Left lung (tissue), 14 donors: ENCODE measurements at regions of chr16 and their contacts with region 1.

Region 1: DNA sequence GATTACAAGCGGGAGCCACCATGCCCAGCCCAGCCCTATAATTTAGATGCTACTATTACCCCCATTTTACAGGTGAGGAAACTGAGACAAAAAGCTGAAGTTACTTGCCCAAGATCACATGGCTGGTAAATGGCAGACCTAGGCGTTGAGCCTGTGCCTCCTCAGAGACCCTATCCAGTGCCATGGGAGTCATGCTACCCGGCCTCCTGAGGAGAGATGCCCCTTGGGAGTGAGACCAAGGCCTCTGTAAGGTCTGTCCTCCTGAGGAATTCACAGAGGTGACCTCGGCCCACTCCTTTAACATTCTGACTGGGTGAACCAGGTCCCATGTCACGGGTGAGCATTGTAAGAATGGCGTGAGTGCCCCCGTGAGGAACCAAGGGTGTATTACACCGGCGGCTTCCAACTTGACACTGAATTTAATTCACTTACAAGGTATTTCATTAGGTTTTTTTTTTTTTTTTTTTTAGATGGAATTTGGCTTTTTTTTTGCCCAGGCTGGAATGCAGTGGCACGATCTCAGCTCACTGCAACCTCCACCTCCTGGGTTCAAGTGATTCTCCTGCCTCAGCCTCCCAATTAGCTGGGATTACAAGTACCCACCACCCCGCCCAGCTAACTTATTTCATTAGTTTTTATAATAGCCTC is 95.7 kb downstream of the ABCC6 start:
- DNase-seq: peak in 3 of 4 donors; percentile 47 to 66 (median 55)
- ATAC-seq: peak; percentile 97
- H3K4me3 ChIP-seq: no peak overlapping the region
- H3K27ac ChIP-seq: no peak overlapping the region
- H3K4me1 ChIP-seq: no peaks in the 10 kb centered on the region
- H3K27me3 ChIP-seq: no peaks in the 10 kb centered on the region
- CTCF ChIP-seq: peak; percentile 72 to 89

Region 2: DNA sequence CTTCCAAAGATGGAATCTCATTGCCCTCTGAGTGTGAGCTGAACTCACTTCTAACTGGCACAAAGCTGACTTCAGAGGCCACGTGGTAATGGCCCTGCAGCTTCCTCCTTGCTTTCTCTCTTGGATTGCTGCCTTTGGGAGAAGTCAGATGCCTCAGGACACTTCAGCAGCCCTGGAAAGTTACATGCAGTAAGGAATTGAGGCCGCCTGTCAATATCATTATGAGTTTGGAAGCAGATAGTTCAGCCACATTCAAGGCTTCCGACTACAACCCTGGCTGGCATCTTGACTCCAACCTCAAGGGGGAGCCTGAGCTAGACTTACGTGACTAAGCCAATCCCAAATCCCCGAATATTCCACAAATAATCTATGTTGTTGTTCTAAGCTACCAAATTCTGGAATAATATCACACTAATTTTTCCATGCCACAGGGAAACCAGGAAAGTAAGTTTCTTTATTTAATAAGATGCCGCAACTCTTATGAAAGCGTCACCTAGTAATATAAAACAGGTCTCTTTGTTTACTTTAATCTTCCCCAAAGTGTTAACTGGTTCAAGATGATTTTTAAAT is 252.8 kb before region 1 on chr16:
- intact Hi-C with region 1: loop called in 1 of 2 experiments (anchors 10 kb)
- DNase-seq: peak in 2 of 4 donors; percentile 42 to 49
- ATAC-seq: peak; percentile 78
- H3K4me3 ChIP-seq: no peak overlapping the region
- H3K27ac ChIP-seq: no peak overlapping the region
- H3K4me1 ChIP-seq: peaks cover 3 to 23% of the 10 kb centered on the region in 2 donors
- H3K27me3 ChIP-seq: no peaks in the 10 kb centered on the region
- CTCF ChIP-seq: peak; percentile 44 to 64

Region 3: DNA sequence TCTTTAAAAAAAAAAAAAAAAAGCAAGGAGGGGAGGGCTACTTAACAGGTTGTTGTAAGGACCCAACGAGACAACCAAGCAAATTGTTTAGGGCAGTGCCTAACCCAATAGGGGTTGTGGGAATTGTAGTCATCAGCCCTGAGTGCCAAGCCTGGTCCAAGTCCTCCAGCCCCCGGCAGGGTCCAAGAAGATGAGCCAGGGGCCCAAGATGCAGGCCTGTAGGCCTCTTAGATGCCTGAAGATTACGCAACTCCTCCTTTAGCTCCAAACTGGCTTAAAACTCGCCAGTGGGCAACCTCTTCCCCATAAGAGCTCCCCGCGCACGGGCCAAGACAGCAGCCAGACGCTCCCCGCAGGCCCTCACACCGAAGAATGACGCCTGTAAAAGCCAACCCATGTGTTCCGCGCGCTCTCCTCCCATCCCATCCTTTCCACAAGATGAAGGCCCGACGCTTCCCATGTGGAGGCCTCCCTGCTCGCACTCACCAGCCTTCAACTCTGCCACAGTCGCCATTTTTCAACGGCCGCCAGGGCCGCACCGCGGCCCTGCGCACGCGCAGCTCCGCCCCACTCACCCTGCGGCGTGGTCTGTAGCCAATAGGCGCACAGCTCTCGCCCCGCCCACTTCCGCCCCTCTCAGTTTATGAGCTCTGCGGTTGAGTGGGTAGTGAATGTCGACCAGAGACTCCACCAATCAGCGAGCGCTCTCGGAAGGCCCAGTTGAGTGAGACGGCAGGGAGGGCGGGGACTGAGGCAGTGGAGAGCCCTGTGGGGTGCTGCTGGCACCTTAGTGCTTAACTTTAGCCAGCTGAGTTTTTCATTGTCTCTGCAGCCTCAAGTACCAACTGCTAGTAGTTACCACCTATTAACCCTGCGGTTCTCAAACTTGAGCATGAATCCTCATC is 239.3 kb before region 1 on chr16 and contains the start of gene CEP20:
- intact Hi-C with region 1: no loop called
- DNase-seq: peak; percentile 98 to 100 (median 98)
- ATAC-seq: peak; percentile 100
- H3K4me3 ChIP-seq: peak within 1 kb of the TSS; percentile 64 to 92
- H3K27ac ChIP-seq: peak within 1 kb of the TSS; percentile 72 to 89
- H3K4me1 ChIP-seq: peaks cover 9 to 35% of the 10 kb centered on the region in 2 donors
- H3K27me3 ChIP-seq: no peaks in the 10 kb centered on the region
- CTCF ChIP-seq: peak in 1 of 2 donors; percentile 31
- polyA plus RNA-seq, gene CEP20: 34.1 to 44.6 (median 38.5) TPM